HCT116 (cell line): ENCODE measurements at regions of chr2 and their contacts with region 1.

Region 1: DNA sequence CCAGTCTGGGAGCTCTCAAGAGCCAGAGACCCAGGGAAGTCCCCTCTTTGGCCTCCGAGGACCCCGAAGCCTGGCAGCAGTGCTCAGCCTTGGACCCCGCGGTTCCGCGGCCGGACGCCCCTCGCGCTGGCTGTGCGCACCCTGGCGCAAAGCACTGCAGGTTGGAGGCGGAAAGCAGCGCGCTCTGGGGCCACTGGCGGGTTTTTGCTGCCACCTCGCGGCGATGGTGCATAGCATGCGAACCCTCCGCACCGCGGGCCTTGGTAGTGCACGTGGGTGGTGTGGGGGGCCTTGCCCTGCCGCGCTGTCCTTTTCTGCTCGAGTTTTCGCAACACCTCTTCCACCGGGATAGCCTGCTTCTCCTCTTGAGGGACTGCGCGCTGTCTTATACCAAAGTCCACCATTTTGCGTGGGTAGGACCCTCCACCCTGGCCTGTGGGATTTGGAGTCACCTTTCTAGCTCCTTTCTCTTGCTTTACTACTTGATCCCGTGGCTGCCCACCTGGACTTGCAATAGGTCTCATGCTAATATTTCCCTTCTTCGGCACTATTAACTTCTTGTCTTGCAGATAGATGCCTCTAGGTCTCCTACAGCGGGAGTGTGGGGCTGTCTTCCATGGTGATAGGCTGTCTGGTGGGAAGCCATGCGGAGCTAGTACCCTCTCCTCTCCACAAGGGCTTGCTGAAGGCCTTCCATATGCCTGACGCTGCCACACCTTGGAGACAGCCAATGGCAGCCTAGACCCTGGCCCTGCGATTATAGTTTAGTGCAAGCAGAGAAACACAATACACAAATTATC is 14.3 kb downstream of the SIX3 start:
- DNase-seq: peak; percentile 46
- ATAC-seq: peak; percentile 85
- H3K4me3 ChIP-seq: peak overlapping the region; percentile 23 to 37; a peak in 2 of 4 replicates
- H3K27ac ChIP-seq: no peak overlapping the region
- H3K4me1 ChIP-seq: peaks cover 0 to 35% of the 10 kb centered on the region in 2 experiments; a peak in 3 of 4 replicates
- H3K27me3 ChIP-seq: no peaks in the 10 kb centered on the region
- CTCF ChIP-seq: peak; percentile 85 to 97 (median 89)
- POLR2A ChIP-seq: no peak
- RAD21 ChIP-seq: peak; percentile 99

Region 2: DNA sequence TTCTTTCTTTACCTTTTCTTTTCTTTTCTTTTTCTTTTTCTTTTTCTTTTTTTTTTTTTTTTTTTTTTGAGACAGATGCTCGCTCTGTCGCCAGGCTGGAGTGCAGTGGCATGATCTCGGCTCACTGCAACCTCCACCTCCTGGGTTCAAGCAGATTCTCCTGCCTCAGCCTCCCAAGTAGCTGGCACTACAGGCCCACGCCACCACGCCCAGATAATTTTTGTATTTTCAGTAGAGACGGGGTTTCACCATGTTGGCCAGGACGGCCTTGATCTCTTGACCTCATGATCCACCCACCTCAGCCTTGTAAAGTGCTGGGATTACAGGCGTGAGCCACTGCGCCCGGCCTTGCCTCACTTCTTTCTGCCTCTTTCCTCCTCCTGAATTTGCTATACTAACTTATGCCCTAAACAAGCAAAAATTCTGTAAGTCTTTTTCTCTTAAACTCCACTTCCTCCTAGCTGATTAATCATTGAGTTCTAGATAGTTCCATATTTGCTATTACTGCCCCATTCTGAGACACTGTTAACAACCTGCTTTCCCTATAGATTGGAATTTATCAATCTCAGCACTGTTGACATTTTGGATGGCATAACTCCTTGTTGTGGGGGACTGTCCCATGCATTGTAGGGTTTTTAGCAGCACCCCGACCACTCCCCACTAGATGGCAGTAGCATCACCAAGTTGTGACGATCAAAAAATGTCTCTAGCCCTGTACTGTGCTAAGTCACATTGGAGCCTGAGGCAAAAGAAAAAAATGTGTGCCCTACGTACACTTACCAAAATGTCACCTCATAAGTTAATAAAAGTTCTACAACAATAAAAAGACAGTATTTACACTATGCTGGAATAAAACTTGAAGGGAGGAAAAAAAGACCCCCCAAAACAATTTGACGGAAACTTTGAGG is 1343.6 kb before region 1 on chr2:
- CTCF ChIA-PET with region 1: no interaction called
- POLR2A ChIA-PET with region 1: no interaction called
- RAD21 ChIA-PET with region 1: no interaction called
- intact Hi-C with region 1: loop called (anchors 5 kb)
- DNase-seq: peak; percentile 74
- ATAC-seq: peak; percentile 94
- H3K4me3 ChIP-seq: no peak overlapping the region
- H3K27ac ChIP-seq: no peak overlapping the region
- H3K4me1 ChIP-seq: no peaks in the 10 kb centered on the region
- H3K27me3 ChIP-seq: no peaks in the 10 kb centered on the region
- CTCF ChIP-seq: peak; percentile 54 to 92 (median 92); a peak in 5 of 6 replicates
- POLR2A ChIP-seq: no peak
- RAD21 ChIP-seq: peak; percentile 81

Region 3: DNA sequence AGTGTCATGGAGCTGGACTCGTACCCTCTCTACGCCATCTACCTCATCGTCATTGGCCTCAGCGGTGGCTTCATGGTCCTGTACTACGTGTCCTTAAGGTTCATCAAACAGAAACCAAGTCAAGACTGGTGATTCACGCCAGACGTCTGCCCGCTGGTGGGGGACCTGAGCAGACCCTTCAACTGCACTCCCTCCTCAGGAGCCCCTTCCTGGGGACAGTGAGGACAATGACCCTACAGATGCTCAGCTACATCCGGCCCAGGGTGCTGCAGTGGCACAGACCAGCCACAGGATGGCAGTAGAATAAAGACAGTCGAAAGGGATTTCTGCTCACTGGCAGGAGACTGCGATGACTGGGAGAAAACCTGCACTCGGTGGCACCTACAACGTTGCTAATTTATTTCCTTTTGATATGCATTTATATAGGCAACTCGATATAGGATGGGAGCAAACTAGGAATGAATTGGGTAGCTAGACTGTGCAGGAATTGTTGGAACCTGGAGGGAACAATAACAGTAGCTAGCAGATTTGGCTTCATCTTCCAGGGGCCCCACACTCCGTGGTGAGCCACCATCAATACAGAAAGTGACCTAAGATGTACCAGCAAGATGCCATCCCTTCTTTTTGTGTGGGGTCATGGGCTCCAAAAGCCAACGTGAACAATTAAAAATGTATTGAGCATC is 1077.9 kb before region 1 on chr2:
- CTCF ChIA-PET with region 1: interaction called, 3 read pairs
- POLR2A ChIA-PET with region 1: no interaction called
- RAD21 ChIA-PET with region 1: no interaction called
- intact Hi-C with region 1: loop called (anchors 5 kb)
- DNase-seq: peak; percentile 23
- ATAC-seq: peak; percentile 85
- H3K4me3 ChIP-seq: no peak overlapping the region
- H3K27ac ChIP-seq: no peak overlapping the region
- H3K4me1 ChIP-seq: 0 out of 4 replicates have a peak, but pooled peaks cover 0 to 6% of the 10 kb centered on the region in 2 experiments
- H3K27me3 ChIP-seq: 0 out of 2 replicates have a peak, but pooled peaks cover 4% of the 10 kb centered on the region
- CTCF ChIP-seq: peak; percentile 68 to 98 (median 97)
- POLR2A ChIP-seq: no peak
- RAD21 ChIP-seq: peak; percentile 93

Region 4: GRCh38 chr2:44044281-44044720 is 911.5 kb before region 1 on chr2:
- CTCF ChIA-PET with region 1: interaction called, 12 read pairs
- POLR2A ChIA-PET with region 1: no interaction called
- RAD21 ChIA-PET with region 1: interaction called in 1 of 2 experiments, 3 read pairs
- intact Hi-C with region 1: loop called (anchors 2 kb)
- DNase-seq: peak; percentile 77
- ATAC-seq: peak; percentile 100
- H3K4me3 ChIP-seq: no peak overlapping the region
- H3K27ac ChIP-seq: peak overlapping the region; percentile 7; the same call in 1 of the 2 replicates
- H3K4me1 ChIP-seq: peaks cover 0 to 7% of the 10 kb centered on the region in 2 experiments; a peak in 3 of 4 replicates
- H3K27me3 ChIP-seq: no peaks in the 10 kb centered on the region
- CTCF ChIP-seq: peak; percentile 83 to 98 (median 98)
- POLR2A ChIP-seq: no peak
- RAD21 ChIP-seq: peak; percentile 95

Region 5: GRCh38 chr2:44244129-44244871 is 711.5 kb before region 1 on chr2:
- CTCF ChIA-PET with region 1: interaction called, 12 read pairs
- POLR2A ChIA-PET with region 1: no interaction called
- RAD21 ChIA-PET with region 1: interaction called in 1 of 2 experiments, 3 read pairs
- intact Hi-C with region 1: loop called (anchors 2 kb)
- DNase-seq: peak; percentile 44
- ATAC-seq: peak; percentile 76
- H3K4me3 ChIP-seq: no peak overlapping the region
- H3K27ac ChIP-seq: no peak overlapping the region
- H3K4me1 ChIP-seq: peaks cover 0 to 4% of the 10 kb centered on the region in 2 experiments; a peak in 2 of 4 replicates
- H3K27me3 ChIP-seq: no peaks in the 10 kb centered on the region
- CTCF ChIP-seq: peak; percentile 37 to 69 (median 44); a peak in 4 of 6 replicates
- POLR2A ChIP-seq: no peak
- RAD21 ChIP-seq: peak; percentile 55

Region 6: DNA sequence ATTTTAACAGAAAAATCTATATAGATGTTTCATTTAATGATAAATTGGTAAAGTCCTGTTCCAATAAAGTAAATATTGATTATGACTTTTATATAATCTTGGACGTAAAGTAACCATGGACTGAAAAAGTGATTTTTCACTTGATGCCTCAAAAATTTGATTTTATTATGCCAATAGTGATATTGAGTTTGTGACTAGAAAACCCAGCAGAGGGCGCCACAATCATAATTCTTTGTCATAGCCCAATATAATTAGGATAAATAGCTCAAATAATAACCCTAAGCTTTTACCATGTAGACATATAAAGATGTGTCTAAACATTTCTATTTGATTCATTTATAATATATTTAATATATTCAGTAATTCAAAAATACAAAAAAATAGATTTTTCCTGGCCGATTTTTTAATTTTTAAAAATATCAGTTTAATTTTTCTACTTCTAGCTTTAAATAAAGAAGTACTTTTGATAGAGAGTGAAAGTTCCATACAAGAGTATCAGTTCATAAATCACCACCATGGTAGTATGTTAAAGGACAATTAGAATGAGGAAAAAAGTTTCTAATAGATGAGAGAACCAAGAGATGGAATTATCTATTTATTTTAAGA is 563.4 kb before region 1 on chr2:
- CTCF ChIA-PET with region 1: interaction called, 32 read pairs
- POLR2A ChIA-PET with region 1: no interaction called
- RAD21 ChIA-PET with region 1: interaction called, 4 to 5 read pairs
- intact Hi-C with region 1: loop called (anchors 1 kb)
- DNase-seq: peak; percentile 6
- ATAC-seq: no peak
- H3K4me3 ChIP-seq: no peak overlapping the region
- H3K27ac ChIP-seq: no peak overlapping the region
- H3K4me1 ChIP-seq: no peaks in the 10 kb centered on the region
- H3K27me3 ChIP-seq: no peaks in the 10 kb centered on the region
- CTCF ChIP-seq: peak; percentile 56 to 79 (median 62)
- POLR2A ChIP-seq: no peak
- RAD21 ChIP-seq: peak; percentile 57

Region 7: DNA sequence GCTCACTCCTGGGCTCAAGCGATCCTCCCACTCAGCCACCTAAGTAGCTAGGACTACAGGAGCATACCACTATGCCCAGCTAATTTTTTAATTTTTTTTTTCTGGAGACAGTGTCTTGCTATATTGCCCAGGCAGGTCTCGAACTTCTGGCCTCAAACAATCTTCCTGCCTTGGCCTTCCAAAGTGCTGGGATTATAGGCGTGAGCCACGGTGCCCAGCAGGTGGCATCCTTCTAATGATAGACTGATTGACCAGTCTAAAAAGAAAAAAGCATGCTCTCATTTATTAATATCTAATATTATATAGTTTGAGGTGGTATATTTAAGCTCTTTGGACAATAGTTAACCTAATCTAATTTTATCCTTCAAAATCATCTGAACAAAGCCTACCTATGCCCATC is 395.4 kb before region 1 on chr2:
- CTCF ChIA-PET with region 1: interaction called, 7 read pairs
- POLR2A ChIA-PET with region 1: no interaction called
- RAD21 ChIA-PET with region 1: no interaction called
- intact Hi-C with region 1: loop called (anchors 5 kb)
- DNase-seq: no peak
- ATAC-seq: peak; percentile 59; the same call in 1 of the 2 replicates
- H3K4me3 ChIP-seq: no peak overlapping the region
- H3K27ac ChIP-seq: no peak overlapping the region
- H3K4me1 ChIP-seq: no peaks in the 10 kb centered on the region
- H3K27me3 ChIP-seq: no peaks in the 10 kb centered on the region
- CTCF ChIP-seq: peak; percentile 39 to 51 (median 43); a peak in 5 of 6 replicates
- POLR2A ChIP-seq: no peak
- RAD21 ChIP-seq: peak; percentile 52